Activated CD4-positive, alpha-beta memory T cell treated with anti-CD3 and anti-CD28 coated beads, Interleukin-2, amount 10 ng/mL, durations not matched to agents 7 days and 5 days (primary cell): ENCODE measurements at regions of chr6 and their contacts with region 1.

Region 1: DNA sequence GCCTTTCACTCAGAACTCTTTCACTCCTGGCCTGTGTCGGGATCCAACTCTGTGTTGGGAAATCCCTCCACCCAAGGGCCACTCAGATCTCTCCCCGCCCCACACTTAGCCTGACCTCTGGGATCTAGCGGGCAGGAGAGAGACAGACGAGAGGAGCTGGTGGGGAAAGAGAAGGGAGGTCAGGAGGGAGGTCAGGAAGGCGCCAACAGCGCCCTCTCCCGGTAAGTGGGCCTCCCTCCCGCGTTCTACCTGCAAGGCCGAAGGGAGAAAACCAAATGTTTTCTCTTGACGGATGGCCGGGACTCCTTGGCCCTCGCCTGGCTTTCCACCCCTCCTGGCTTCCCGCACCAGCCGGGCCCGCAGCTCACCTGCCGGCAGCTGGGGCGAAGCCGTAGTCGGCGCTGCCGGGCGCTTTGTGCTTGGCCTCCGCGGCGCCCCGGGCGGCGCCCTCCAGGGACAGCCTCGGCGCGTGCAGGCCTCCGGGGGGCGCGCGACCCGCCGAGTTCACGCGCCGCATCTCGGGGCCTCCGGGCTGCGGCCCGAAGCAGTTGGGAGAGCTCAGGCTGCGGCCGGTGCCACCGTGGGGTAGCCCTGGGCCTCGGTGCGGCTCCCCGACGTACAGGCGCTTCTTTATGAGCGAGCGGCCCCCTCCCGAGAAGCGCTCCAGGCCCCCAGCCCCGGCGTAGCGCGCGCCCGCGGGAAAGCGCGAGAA is 38.2 kb downstream of the C6orf132 start:
- DNase-seq: peak; percentile 79
- H3K4me3 Mint-ChIP-seq: peak overlapping the region; percentile 67
- H3K27ac Mint-ChIP-seq: peak overlapping the region; percentile 57
- H3K4me1 Mint-ChIP-seq: peaks cover 42% of the 10 kb centered on the region
- H3K27me3 Mint-ChIP-seq: peaks cover 2% of the 10 kb centered on the region

Region 2: DNA sequence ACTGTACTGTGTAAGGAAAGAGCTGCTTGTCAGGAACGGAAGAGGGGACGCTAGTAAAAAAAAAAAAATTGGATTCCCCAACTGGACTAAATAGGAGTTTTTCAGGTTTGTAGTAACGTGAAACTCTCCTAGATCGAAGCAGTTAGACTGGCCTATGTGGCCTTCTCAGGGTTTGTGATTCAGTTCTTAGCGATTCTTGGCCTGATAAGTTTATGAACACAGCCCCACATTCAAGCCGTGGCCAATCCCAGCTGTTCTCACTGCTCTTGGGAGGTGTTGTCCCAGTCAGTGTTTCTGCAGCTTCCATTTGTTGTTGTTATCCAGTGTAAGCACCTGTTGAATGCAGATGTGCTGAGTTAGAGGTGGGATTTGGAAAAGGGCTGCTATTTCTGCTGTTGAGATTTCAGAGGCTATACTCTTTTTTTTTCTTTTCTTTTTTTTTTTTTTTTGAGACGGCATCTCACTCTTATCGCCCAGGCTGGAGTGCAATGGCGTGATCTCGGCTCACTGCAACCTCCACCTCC is 24.2 kb before region 1 on chr6:
- CTCF ChIA-PET with region 1: interaction called, 12 read pairs
- POLR2A ChIA-PET with region 1: no interaction called
- DNase-seq: no peak
- H3K4me3 Mint-ChIP-seq: no peak overlapping the region
- H3K27ac Mint-ChIP-seq: no peak overlapping the region
- H3K4me1 Mint-ChIP-seq: no peaks in the 10 kb centered on the region
- H3K27me3 Mint-ChIP-seq: no peaks in the 10 kb centered on the region

Region 3: DNA sequence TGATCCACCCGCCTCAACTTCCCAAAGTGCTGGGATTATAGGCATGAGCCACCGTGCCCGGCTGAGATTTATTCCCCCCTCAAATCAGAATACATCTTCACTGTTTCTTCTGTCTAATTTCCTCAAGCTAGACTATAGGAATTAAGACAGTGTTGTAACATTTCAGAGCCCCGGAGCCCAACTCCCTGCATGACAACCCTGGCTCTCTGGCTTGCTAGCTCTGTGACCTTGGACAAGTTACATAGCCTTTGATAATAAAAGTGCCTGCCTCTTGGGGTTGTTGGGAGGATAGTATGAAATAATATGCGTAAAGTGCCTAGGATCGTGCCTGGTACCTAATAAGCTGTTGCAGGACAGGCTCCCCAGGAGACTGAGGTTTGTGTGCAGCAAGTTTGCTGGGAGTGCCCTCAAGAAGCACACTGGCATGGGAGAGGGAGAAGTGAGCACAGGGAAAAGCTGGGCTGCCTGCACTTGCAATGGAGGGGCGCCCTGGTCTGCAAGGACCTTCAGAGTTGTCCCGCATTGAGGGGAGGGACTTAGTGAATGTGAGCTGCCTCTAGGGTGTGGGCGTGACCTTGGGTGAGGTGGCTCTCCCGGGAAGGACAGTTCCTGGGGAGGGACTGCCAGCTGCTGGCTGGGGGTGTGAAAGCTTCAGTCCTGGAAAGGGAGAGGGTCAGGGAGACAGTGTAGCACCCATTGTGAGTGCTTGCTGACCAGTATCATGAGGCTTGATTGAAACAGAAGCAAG is 10.5 kb before region 1 on chr6:
- CTCF ChIA-PET with region 1: interaction called, 30 read pairs
- POLR2A ChIA-PET with region 1: interaction called, 5 read pairs
- DNase-seq: no peak
- H3K4me3 Mint-ChIP-seq: no peak overlapping the region
- H3K27ac Mint-ChIP-seq: no peak overlapping the region
- H3K4me1 Mint-ChIP-seq: peaks cover 8% of the 10 kb centered on the region
- H3K27me3 Mint-ChIP-seq: no peaks in the 10 kb centered on the region

Region 4: DNA sequence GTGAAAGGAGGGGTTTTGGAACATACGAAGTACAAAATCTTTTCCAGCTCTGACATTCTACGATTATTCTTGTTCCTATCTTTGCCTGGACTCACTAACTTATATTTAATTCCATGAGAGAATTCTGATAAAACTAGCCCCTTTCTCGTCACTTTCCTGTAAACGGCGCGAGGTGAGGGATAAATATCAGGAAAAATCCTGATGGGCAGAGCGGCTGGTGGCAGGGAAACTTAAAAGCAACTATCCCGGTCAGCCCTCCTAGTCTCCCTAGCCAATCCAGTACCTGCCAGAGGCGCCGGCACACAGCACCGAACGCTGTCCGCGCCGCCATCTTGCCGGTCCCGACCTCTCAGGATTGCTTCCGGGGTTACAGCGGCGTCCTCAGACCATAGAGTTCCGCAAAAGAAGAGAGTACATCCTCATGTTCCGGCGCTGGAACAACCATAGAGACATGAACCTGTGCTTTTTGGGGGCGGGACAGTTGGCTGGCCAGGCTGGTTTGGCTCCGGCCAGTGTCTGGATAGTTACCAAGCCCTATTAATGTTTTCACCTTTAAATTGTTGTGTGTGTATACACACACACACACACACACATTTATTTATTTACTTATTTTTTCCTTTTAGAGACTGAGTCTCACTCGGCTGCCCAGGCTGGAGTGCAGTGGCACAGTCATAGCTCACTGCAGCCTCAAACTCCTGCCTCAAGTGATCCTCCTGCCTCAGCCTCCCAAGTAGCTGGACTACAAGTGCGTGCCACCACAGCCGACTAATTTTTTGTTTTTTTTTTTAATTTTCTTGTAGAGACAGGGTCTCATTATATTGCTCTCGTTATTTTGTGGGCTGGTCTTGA is 113.5 kb after region 1 on chr6 and contains the start of gene MRPS10:
- CTCF ChIA-PET with region 1: interaction called, 10 read pairs
- POLR2A ChIA-PET with region 1: no interaction called
- DNase-seq: peak; percentile 93
- H3K4me3 Mint-ChIP-seq: peak within 1 kb of the TSS; percentile 97
- H3K27ac Mint-ChIP-seq: peak within 1 kb of the TSS; percentile 80
- H3K4me1 Mint-ChIP-seq: peaks cover 33% of the 10 kb centered on the region
- H3K27me3 Mint-ChIP-seq: no peaks in the 10 kb centered on the region
- total RNA-seq, gene MRPS10: 28.4 to 32.8 TPM